CD8-positive, alpha-beta T cell (primary cell): ENCODE measurements at regions of chr1 and their contacts with region 1.

Region 1: GRCh38 chr1:13725714-13726175 is 25.8 kb downstream of the PRDM2 start:
- DNase-seq: peak; percentile 36 to 82 (median 68)
- ATAC-seq: peak; percentile 50
- H3K4me3 ChIP-seq: no peak overlapping the region
- H3K4me3 Mint-ChIP-seq: no peak overlapping the region
- H3K27ac ChIP-seq: no peak overlapping the region
- H3K27ac Mint-ChIP-seq: peak overlapping the region; percentile 77
- H3K4me1 ChIP-seq: peaks cover 45% of the 10 kb centered on the region
- H3K4me1 Mint-ChIP-seq: peaks cover 79% of the 10 kb centered on the region
- H3K27me3 ChIP-seq: no peaks in the 10 kb centered on the region
- H3K27me3 Mint-ChIP-seq: no peaks in the 10 kb centered on the region
- CTCF ChIP-seq: peak; percentile 56

Region 2: GRCh38 chr1:13570924-13571323 is 154.8 kb before region 1 on chr1:
- CTCF ChIA-PET with region 1: no interaction called
- POLR2A ChIA-PET with region 1: no interaction called
- intact Hi-C with region 1: loop called in 1 of 2 experiments (anchors 5 kb)
- DNase-seq: peak in 1 of 9 experiments; percentile 9
- ATAC-seq: no peak
- H3K4me3 ChIP-seq: no peak overlapping the region
- H3K4me3 Mint-ChIP-seq: no peak overlapping the region
- H3K27ac ChIP-seq: no peak overlapping the region
- H3K27ac Mint-ChIP-seq: no peak overlapping the region
- H3K4me1 ChIP-seq: no peaks in the 10 kb centered on the region
- H3K4me1 Mint-ChIP-seq: no peaks in the 10 kb centered on the region
- H3K27me3 ChIP-seq: no peaks in the 10 kb centered on the region
- H3K27me3 Mint-ChIP-seq: peaks cover 12% of the 10 kb centered on the region
- CTCF ChIP-seq: peak; percentile 25

Region 3: GRCh38 chr1:13694886-13695285 is 30.9 kb before region 1 on chr1:
- CTCF ChIA-PET with region 1: interaction called, 13 read pairs
- POLR2A ChIA-PET with region 1: interaction called, 5 read pairs
- intact Hi-C with region 1: loop called in 1 of 2 experiments (anchors 2 kb)
- DNase-seq: no peak
- ATAC-seq: no peak
- H3K4me3 ChIP-seq: no peak overlapping the region
- H3K4me3 Mint-ChIP-seq: no peak overlapping the region
- H3K27ac ChIP-seq: no peak overlapping the region
- H3K27ac Mint-ChIP-seq: no peak overlapping the region
- H3K4me1 ChIP-seq: peaks cover 10% of the 10 kb centered on the region
- H3K4me1 Mint-ChIP-seq: peaks cover 14% of the 10 kb centered on the region
- H3K27me3 ChIP-seq: no peaks in the 10 kb centered on the region
- H3K27me3 Mint-ChIP-seq: peaks cover 15% of the 10 kb centered on the region
- CTCF ChIP-seq: no peak

Region 4: DNA sequence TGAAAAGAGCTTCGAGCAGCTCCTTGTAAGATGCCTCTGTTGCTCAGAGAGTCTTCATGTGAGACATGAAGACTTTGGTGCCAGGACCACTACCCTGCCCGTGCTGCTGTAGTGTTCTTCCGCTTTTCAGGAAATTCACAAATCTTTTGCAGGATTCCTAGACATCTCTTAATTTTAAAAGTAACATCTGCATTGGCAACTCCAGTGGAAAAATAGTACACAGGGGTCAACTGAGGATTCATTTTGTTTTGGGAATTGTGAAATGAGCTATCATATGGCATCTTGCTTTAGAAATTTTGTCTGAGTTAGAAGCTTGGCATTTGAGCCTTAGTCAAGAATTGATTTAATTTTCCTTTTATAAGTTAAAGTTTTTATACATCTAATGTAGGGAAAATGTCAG is 18.6 kb before region 1 on chr1:
- CTCF ChIA-PET with region 1: interaction called, 40 read pairs
- POLR2A ChIA-PET with region 1: interaction called, 7 read pairs
- intact Hi-C with region 1: loop called in 1 of 2 experiments (anchors 2 kb)
- DNase-seq: no peak
- ATAC-seq: no peak
- H3K4me3 ChIP-seq: no peak overlapping the region
- H3K4me3 Mint-ChIP-seq: no peak overlapping the region
- H3K27ac ChIP-seq: no peak overlapping the region
- H3K27ac Mint-ChIP-seq: peak overlapping the region; percentile 38
- H3K4me1 ChIP-seq: peaks cover 64% of the 10 kb centered on the region
- H3K4me1 Mint-ChIP-seq: peaks cover 83% of the 10 kb centered on the region
- H3K27me3 ChIP-seq: no peaks in the 10 kb centered on the region
- H3K27me3 Mint-ChIP-seq: no peaks in the 10 kb centered on the region
- CTCF ChIP-seq: no peak

Region 5: GRCh38 chr1:13759088-13759487 is 33.3 kb after region 1 on chr1:
- CTCF ChIA-PET with region 1: interaction called, 18 read pairs
- POLR2A ChIA-PET with region 1: no interaction called
- intact Hi-C with region 1: no loop called
- DNase-seq: peak in 2 of 9 experiments; percentile 24 to 42
- ATAC-seq: peak; percentile 21
- H3K4me3 ChIP-seq: no peak overlapping the region
- H3K4me3 Mint-ChIP-seq: no peak overlapping the region
- H3K27ac ChIP-seq: no peak overlapping the region
- H3K27ac Mint-ChIP-seq: no peak overlapping the region
- H3K4me1 ChIP-seq: peaks cover 80% of the 10 kb centered on the region
- H3K4me1 Mint-ChIP-seq: peaks cover 89% of the 10 kb centered on the region
- H3K27me3 ChIP-seq: no peaks in the 10 kb centered on the region
- H3K27me3 Mint-ChIP-seq: no peaks in the 10 kb centered on the region
- CTCF ChIP-seq: no peak

Region 6: DNA sequence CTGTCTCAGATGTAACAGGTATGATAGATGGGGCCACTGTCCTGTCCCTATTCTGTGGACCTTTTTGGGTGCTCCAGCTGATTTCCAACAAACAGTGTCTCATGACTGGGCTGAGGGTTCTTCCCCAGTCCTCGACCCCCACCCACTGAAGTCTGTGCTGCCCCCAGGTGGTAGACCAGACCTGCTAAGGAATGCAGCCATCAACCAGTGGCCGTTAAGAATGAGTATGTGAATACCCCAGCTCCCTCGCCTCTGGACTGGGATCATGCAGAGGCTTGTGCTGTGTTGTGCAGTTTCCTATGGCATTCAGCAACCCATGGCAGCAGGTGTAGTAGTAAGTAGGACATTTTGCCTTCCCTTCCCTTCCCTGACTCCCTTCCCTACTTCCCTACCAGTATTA is 689.6 kb after region 1 on chr1:
- CTCF ChIA-PET with region 1: no interaction called
- POLR2A ChIA-PET with region 1: no interaction called
- intact Hi-C with region 1: no loop called
- DNase-seq: no peak
- ATAC-seq: no peak
- H3K4me3 ChIP-seq: no peak overlapping the region
- H3K4me3 Mint-ChIP-seq: no peak overlapping the region
- H3K27ac ChIP-seq: no peak overlapping the region
- H3K27ac Mint-ChIP-seq: no peak overlapping the region
- H3K4me1 ChIP-seq: no peaks in the 10 kb centered on the region
- H3K4me1 Mint-ChIP-seq: no peaks in the 10 kb centered on the region
- H3K27me3 ChIP-seq: no peaks in the 10 kb centered on the region
- H3K27me3 Mint-ChIP-seq: peaks cover 2% of the 10 kb centered on the region
- CTCF ChIP-seq: no peak